HCT116 (cell line): ENCODE measurements at regions of chr1 and their contacts with region 1.

Region 1: DNA sequence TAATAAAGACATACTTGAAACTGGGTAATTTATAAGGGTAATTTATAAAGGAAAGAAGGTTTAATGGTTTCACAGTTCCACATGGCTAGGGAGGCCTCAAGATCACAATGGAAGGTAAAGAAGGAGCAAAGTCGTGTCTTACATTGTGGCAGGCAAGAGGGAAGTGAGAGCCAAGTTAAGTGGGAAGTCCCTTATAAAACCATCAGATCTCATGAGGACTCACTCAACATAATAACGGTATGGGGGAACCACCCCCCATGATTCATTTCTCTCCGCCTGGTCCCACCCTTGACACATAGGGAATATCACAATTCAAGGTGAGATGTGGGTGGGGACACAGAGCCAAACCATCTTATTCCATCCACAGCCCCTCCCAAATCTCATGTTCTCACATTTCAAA is 76.8 kb upstream of the ZNF678 start:
- DNase-seq: no peak
- ATAC-seq: no peak
- H3K4me3 ChIP-seq: no peak overlapping the region
- H3K27ac ChIP-seq: no peak overlapping the region
- H3K4me1 ChIP-seq: no peaks in the 10 kb centered on the region
- H3K27me3 ChIP-seq: no peaks in the 10 kb centered on the region
- CTCF ChIP-seq: no peak
- POLR2A ChIP-seq: no peak
- RAD21 ChIP-seq: no peak

Region 2: DNA sequence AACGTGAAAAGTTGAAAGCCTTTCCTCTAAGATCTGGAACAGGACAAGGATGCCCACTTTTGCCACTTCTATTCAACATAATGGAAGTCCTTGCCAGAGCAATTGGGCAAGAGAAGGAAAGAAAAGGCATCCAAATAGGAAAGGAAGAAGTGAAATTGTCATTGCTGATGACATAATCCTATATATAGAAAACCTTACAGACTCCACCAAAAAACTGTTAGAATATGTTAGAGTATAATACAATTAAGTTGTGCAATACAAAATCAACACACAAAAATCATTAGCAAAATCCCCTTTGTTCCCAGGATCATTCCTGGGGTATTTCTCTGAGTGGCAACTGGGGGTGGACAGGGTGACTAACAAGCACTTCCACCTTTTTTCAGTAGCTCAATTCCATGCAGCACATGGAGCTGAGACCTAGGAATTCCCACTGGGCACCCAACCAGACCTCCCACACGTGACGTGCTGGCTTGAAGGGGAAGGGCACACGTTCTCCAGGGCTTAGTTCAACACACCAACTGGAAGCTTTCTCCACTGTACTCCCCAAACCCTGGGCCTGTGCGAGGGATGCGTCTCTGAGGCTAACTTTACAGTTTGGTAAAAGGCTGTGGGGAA is 928.4 kb before region 1 on chr1:
- CTCF ChIA-PET with region 1: no interaction called
- POLR2A ChIA-PET with region 1: no interaction called
- RAD21 ChIA-PET with region 1: no interaction called
- intact Hi-C with region 1: no loop called
- DNase-seq: no peak
- ATAC-seq: no peak
- H3K4me3 ChIP-seq: no peak overlapping the region
- H3K27ac ChIP-seq: no peak overlapping the region
- H3K4me1 ChIP-seq: no peaks in the 10 kb centered on the region
- H3K27me3 ChIP-seq: no peaks in the 10 kb centered on the region
- CTCF ChIP-seq: no peak
- POLR2A ChIP-seq: no peak
- RAD21 ChIP-seq: no peak

Region 3: DNA sequence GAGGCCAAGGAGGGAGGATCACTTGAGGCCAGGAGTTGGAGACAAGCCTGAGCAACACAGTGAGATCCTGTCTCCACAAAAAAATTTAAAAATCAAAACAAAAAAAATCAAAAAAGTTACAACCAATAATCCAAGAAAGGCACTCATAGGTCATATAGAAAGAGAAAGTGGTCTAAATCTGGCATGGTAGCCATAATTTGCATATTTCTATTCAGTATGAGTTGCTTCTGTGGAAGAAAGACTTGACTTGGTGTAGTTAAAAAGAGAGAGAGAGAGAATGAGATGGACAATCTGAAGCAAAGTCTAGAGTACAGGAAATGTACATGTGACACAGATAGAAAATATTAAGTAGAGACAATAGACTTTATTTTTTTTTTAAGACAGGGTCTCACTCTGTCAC is 226.1 kb after region 1 on chr1:
- CTCF ChIA-PET with region 1: no interaction called
- POLR2A ChIA-PET with region 1: no interaction called
- RAD21 ChIA-PET with region 1: no interaction called
- intact Hi-C with region 1: no loop called
- DNase-seq: no peak
- ATAC-seq: no peak
- H3K4me3 ChIP-seq: no peak overlapping the region
- H3K27ac ChIP-seq: no peak overlapping the region
- H3K4me1 ChIP-seq: no peaks in the 10 kb centered on the region
- H3K27me3 ChIP-seq: no peaks in the 10 kb centered on the region
- CTCF ChIP-seq: no peak
- POLR2A ChIP-seq: no peak
- RAD21 ChIP-seq: no peak

Region 4: DNA sequence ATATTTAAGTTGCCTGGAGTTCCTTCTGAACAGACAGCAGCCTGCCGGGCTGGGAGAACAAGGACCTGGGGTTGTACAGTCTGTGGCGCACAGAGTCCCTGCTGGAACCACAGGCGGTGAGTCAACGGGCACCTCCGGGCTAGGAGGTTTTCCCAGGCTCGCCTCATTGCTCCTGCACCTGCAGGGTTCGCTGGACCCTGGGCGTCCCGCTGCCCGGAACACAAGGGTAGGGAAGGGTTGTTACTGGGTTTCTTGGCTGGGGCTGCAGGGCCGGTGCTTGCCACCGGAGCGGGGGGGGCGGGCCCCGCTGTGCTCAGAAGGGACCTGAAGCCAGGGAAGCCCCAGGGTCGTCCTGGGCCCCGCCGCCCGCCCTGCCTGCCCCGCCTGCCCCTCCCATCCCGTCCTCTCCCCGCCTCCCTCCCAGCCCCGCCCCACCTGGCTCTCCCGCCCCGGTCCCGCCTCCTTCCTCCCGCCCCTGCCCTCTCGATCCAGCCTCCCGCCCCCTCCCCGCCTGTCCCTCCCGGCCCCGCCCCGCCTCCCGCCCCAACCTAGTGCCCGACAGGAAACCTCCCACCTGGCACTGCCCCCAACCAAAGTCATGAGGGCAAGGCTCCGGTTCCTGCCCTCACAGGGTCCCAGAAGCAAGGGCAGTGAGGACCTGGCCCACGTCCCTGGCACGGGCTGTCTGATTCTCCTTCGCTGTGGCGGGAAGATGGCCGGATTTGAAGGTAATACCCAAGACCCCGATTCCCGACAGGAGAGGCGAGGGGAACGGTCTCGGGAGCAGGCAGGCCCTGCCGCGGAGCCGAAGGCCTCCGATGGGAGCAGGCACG is 241.7 kb after region 1 on chr1:
- CTCF ChIA-PET with region 1: interaction called, 4 read pairs
- POLR2A ChIA-PET with region 1: no interaction called
- RAD21 ChIA-PET with region 1: no interaction called
- intact Hi-C with region 1: loop called (anchors 5 kb)
- DNase-seq: peak; percentile 57
- ATAC-seq: peak; percentile 78
- H3K4me3 ChIP-seq: peak overlapping the region; percentile 47 to 56
- H3K27ac ChIP-seq: peak overlapping the region; percentile 38
- H3K4me1 ChIP-seq: peaks cover 8 to 33% of the 10 kb centered on the region in 2 experiments
- H3K27me3 ChIP-seq: no peaks in the 10 kb centered on the region
- CTCF ChIP-seq: no peak
- POLR2A ChIP-seq: no peak
- RAD21 ChIP-seq: no peak

Region 5: DNA sequence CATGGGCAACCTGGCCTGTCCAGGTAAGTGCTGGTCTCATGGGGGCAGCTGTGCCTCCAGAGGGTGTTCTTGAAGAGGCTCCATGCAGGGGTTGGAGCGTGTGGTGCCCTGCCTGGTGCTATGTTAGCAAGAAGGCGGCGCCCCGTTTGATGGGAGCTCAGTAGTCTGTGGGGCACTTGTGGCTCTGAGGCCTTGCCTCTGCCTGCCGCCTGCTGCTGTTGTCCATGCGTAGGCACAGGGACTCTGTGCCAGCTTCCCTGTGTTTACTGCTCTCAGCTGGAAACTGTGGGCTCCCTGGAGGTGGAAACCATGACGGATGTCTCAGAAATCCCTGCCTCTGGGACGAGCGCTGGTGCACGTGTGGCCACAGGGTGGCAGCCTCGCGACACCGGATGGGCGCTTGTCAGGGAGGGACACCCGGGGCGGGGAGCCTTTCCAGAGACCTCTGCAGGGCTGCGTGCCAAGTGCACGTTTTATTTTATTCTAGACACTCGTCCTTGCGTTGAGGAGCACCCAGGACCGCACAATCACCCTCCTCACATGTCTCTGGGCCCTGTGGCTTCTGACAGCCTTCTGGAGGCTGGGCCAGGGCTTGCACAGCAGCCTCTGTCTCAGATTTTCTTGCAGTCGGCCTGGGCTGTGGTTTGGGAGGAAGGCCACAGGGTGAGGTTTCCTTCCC is 275.8 kb after region 1 on chr1:
- CTCF ChIA-PET with region 1: interaction called, 4 read pairs
- POLR2A ChIA-PET with region 1: no interaction called
- RAD21 ChIA-PET with region 1: no interaction called
- intact Hi-C with region 1: loop called (anchors 5 kb)
- DNase-seq: peak; percentile 57
- ATAC-seq: peak; percentile 95
- H3K4me3 ChIP-seq: no peak overlapping the region
- H3K27ac ChIP-seq: no peak overlapping the region; the same call in 1 of the 2 replicates
- H3K4me1 ChIP-seq: peaks cover 3 to 18% of the 10 kb centered on the region in 2 experiments; a peak in 2 of 4 replicates
- H3K27me3 ChIP-seq: no peaks in the 10 kb centered on the region
- CTCF ChIP-seq: peak; percentile 90 to 95 (median 93)
- POLR2A ChIP-seq: no peak
- RAD21 ChIP-seq: peak; percentile 99